ENCODE measurements at regions of chr1 and their contacts with region 1.

Region 1: DNA sequence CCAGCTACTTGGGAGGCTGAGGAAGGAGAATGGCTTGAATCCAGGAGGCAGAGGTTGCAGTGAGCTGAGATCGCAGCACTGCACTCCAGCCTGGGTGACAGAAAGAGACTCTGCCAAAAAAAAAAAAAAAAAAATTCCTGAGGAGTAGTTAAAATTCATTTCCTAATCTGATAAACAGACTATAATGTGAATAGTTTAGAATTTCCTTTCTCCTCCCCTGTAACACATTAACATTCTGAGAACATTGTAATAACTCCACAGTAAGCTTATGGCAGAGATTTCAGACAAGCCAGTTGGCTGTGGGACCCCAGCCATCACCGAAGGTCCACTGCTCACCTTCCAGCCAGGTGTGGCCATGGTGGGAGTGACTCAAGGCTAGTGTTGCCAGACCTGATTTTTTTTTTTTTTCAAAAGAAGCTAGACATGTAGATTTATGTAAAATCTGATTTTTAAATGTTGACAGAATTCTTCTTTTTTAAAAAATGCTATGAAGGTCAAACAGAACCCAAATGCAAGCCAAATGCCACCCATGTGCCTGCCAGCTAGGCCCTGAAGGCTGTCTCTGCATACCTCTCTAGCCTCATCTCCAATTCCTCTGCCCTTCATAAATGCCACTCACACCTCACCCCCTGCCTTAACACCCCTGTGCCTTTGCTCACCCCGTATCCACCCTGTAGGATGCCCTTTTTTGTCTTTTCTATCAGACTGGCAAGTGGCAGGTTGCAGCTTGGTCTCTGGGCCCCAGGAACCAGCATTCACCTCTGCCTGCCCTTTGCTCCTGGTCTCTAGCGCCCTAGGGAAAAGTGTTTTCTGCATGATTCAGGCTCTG is 11.7 kb downstream of the KANK4 start:
- DNase-seq: no peak
- H3K4me3 ChIP-seq: no peak overlapping the region
- H3K27me3 ChIP-seq: peaks cover 11% of the 10 kb centered on the region; the same call in 1 of the 2 replicates
- CTCF ChIP-seq: no peak

Region 2: GRCh38 chr1:62181531-62181930 is 126.0 kb before region 1 on chr1:
- CTCF ChIA-PET with region 1: no interaction called
- POLR2A ChIA-PET with region 1: no interaction called
- DNase-seq: no peak
- H3K4me3 ChIP-seq: no peak overlapping the region
- H3K27me3 ChIP-seq: no peaks in the 10 kb centered on the region
- CTCF ChIP-seq: no peak

Region 3: DNA sequence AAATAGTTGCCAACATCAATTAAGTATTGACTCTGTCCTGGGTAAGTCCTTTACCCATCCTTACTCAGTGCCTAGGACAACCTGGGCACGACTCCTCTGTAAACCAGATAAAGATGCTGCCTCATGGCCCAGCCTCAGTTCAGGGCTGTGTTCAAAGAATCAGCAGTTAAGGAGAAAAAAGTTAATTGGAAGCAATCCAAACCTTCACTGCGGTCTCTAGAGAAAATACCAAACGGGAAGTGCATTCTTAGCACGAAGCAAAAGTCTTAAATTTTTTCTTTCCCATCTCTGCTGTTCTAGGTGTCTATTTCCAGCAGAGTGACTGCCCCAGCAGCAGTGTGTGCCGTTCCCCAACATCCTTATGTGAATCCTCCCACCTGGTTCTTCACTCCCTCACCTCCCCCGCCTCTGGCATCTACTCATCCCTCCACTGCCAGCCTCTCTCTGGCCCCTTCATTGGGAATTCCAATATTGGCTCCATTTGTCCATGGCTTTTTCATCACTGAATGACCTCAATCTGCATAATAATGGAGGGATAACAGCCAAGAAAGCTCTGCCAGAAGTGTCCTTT is 11.6 kb before region 1 on chr1:
- CTCF ChIA-PET with region 1: no interaction called
- POLR2A ChIA-PET with region 1: no interaction called
- DNase-seq: peak; percentile 83
- H3K4me3 ChIP-seq: no peak overlapping the region
- H3K27me3 ChIP-seq: peaks cover 2% of the 10 kb centered on the region; the same call in 1 of the 2 replicates
- CTCF ChIP-seq: no peak

Region 4: DNA sequence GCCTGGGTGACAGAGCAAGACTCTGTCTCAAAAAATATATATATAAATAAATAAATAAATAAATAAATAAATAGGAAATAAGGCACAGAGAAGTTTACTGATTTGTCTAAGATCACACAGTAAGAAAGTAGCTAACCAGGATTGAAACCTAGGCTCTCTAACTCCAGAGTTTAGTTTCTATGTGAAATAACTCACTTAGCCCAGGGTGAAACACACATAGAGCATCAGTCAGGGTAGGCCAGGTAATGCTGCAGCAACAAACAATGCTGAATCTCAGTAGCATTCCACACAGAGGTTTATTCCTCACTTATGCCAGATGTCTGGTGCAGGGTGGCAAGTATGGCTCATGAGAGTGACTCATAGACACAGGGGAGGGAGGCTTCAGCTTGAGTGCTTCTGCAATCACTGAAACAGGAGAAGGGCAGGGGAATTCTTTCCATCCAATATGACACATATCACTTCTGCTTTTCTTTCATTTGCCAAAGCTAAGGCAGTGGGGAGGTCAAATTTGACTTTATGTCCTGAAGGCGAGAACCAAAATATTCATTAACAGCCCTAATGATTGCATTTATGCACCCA is 48.8 kb after region 1 on chr1:
- CTCF ChIA-PET with region 1: no interaction called
- POLR2A ChIA-PET with region 1: interaction called, 14 read pairs
- DNase-seq: peak; percentile 33
- H3K4me3 ChIP-seq: no peak overlapping the region
- H3K27me3 ChIP-seq: no peaks in the 10 kb centered on the region
- CTCF ChIP-seq: no peak